ENCODE measurements at regions of chr13 and their contacts with region 1.

Region 1: GRCh38 chr13:31044377-31045285 is 112.2 kb downstream of the TEX26 start:
- DNase-seq: peak; percentile 96
- H3K4me3 Mint-ChIP-seq: peak overlapping the region; percentile 74
- H3K27ac Mint-ChIP-seq: peak overlapping the region; percentile 91
- H3K4me1 Mint-ChIP-seq: peaks cover 48% of the 10 kb centered on the region
- H3K27me3 Mint-ChIP-seq: peaks cover 4% of the 10 kb centered on the region

Region 2: DNA sequence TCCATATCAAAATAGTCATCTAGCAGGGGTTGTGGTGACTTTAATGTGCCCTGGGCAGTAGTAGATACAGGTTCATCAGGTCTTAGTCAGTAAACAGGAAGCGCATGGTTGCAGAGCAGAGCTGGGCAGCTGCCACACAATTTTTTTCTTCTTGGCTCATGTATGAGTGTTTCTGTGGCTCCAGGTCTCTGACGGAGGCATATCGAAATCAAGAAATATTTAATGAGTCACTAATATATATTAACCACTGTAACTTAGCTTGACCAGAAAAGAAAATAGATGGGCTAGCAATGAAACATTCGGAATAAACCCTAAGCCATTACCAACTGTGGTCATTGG is 1125.8 kb before region 1 on chr13:
- intact Hi-C with region 1: no loop called
- DNase-seq: no peak
- H3K4me3 Mint-ChIP-seq: no peak overlapping the region
- H3K27ac Mint-ChIP-seq: no peak overlapping the region
- H3K4me1 Mint-ChIP-seq: peaks cover 15% of the 10 kb centered on the region
- H3K27me3 Mint-ChIP-seq: peaks cover 3% of the 10 kb centered on the region

Region 3: DNA sequence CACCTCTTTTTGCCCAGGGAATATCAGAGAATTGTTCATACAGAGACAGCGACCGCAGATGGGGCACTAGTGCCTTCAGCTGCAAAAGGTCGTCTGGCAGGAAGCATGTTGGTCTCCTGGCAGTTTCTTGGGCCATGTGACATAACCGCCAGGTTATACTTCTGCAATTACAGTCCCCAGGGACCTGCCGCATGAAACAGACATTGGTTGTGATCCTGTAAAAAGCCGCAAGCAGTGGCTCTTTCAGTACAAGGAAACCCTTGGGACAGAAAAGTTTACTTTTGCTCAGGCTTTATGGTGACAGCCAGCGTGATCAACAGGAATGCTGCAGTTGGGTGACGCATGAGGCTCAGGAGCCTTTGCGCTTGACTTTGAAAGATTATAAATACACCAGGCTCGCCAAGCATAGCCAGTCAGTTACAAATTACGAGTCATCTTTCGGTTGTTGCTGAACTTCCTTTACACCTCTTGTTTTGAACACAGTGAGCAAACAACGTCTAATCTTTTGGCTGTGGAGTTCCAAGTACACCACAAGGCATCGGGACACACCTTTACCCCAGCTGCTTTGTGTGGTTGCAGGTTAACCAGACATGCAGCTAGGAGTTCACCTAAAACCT is 672.9 kb before region 1 on chr13:
- intact Hi-C with region 1: loop called (anchors 10 kb)
- DNase-seq: peak; percentile 91
- H3K4me3 Mint-ChIP-seq: peak overlapping the region; percentile 85
- H3K27ac Mint-ChIP-seq: peak overlapping the region; percentile 91
- H3K4me1 Mint-ChIP-seq: peaks cover 75% of the 10 kb centered on the region
- H3K27me3 Mint-ChIP-seq: no peaks in the 10 kb centered on the region

Region 4: GRCh38 chr13:30739761-30740642 is 304.6 kb before region 1 on chr13:
- intact Hi-C with region 1: loop called (anchors 1 kb)
- DNase-seq: peak; percentile 90
- H3K4me3 Mint-ChIP-seq: peak overlapping the region; percentile 78
- H3K27ac Mint-ChIP-seq: peak overlapping the region; percentile 88
- H3K4me1 Mint-ChIP-seq: peaks cover 73% of the 10 kb centered on the region
- H3K27me3 Mint-ChIP-seq: no peaks in the 10 kb centered on the region

Region 5: DNA sequence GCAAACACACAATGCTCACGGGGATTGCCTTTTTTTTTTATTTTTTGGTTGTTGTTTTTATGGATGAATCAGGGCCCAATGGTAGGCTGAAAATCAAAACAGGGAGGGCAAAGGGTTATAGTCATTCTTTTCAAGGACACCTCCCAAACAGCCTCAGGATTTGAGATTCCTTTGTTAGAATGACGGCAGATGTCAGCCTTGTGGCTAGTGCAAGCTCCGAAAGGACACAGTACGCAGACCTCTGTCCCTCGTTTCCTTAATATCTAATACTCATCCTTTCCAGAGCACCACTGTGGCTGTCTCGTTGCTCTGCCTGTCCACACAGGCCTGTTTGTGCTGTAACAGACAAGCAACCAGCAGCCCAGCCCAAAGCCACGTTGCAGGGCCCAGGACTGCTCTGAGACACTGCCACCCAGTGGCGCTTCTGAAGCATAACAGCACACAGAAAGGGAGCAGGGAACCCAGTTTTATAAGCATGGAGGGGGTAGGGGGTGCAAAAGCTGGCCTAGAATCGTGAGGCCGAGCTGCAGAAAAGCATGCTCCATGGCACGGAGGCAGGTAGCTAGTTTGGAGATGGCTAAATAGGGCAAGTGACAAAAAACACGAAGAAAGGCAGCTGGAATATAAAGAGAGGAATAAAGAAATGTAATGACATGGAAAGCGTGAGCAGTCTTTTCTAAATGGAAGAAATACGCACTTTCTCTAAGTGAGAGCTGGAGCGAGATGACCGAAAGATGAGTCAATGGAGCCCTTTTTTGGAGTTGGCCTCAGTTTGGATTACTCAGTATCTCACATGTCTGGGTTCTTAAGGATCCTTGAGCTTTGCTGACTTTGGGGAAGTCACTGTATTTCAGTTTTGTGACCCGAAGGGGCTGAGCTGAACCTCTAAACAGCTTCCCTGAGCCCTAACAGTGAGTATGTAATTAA is 179.2 kb before region 1 on chr13:
- intact Hi-C with region 1: loop called (anchors 1 kb)
- DNase-seq: peak; percentile 83
- H3K4me3 Mint-ChIP-seq: no peak overlapping the region
- H3K27ac Mint-ChIP-seq: no peak overlapping the region
- H3K4me1 Mint-ChIP-seq: peaks cover 8% of the 10 kb centered on the region
- H3K27me3 Mint-ChIP-seq: peaks cover 6% of the 10 kb centered on the region

Region 6: DNA sequence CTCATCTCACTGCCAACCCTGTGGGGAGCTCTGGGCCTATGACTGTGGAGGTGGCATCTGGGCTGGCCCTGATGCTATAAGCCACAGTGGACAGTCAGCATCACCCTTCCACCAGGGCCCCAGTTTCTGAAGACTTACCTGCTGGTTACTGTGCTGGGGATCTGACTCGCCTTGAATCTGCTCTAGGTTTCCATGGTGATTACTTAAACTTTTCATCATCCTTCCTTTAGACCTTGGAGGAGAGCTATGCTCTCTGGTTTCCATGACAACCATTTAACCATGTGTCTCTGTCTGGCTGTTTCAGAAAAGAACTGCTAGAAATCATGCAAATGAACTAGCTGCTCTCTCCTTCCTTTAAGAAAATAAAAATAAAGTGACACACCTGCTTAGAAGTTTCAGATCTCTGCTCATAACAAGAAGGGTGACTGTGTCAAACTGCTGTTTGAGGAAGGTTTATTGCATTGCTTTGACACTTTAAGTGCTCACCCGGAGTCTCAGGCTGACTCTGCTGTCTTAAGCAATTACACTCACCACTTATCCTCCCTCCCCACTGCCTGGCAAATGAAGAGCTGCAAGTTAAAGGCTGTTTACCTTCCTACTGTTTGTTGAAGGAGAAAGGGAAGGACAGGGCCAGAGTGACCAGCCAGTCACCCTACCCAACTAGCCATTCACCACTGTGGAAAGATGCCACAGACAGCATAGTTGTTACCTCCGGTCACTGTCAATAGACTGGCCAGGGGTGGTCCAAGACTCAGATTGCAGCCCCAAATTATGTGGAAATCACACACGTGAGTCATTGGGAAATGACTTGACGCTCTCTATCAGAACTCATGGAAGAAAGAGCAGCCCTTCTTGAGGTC is 29.5 kb after region 1 on chr13:
- intact Hi-C with region 1: loop called (anchors 1 kb)
- DNase-seq: peak; percentile 77
- H3K4me3 Mint-ChIP-seq: no peak overlapping the region
- H3K27ac Mint-ChIP-seq: no peak overlapping the region
- H3K4me1 Mint-ChIP-seq: peaks cover 3% of the 10 kb centered on the region
- H3K27me3 Mint-ChIP-seq: no peaks in the 10 kb centered on the region

Region 7: GRCh38 chr13:31199849-31200636 is 155.4 kb after region 1 on chr13 and contains the start of gene B3GLCT:
- intact Hi-C with region 1: loop called (anchors 5 kb)
- DNase-seq: peak; percentile 95
- H3K4me3 Mint-ChIP-seq: peak within 1 kb of the TSS; percentile 81
- H3K27ac Mint-ChIP-seq: peak within 1 kb of the TSS; percentile 73
- H3K4me1 Mint-ChIP-seq: peaks cover 26% of the 10 kb centered on the region
- H3K27me3 Mint-ChIP-seq: peaks cover 16% of the 10 kb centered on the region
- total RNA-seq, gene B3GLCT: 4.0 and 4.4 TPM in 2 replicates

Measured in activated CD4-positive, alpha-beta T cell treated with anti-CD3 and anti-CD28 coated beads, Interleukin-2, amount 10 ng/mL, durations not matched to agents 24 days and 14 days (primary cell).